Activated T-helper 1 cell treated with anti-CD3 and anti-CD28 coated beads, Interleukin-12 subunit alpha, Interleukin-12 subunit beta, Interleukin-2, Interleukin-4 antibody, amounts not matched to agents 30 ng/mL and 10 ng/mL and 1 ng/mL, durations not matched to agents 14 hours and 24 hours and 36 hours (primary cell): ENCODE measurements at regions of chr15 and their contacts with region 1.

Region 1: GRCh38 chr15:34818526-34818925 is 23.2 kb upstream of the ACTC1 start:
- DNase-seq: no peak
- H3K4me3 Mint-ChIP-seq: no peak overlapping the region
- H3K27ac Mint-ChIP-seq: no peak overlapping the region
- H3K4me1 Mint-ChIP-seq: no peaks in the 10 kb centered on the region
- H3K27me3 Mint-ChIP-seq: peaks cover 19% of the 10 kb centered on the region

Region 2: GRCh38 chr15:34001536-34001935 is 817.0 kb before region 1 on chr15:
- intact Hi-C with region 1: no loop called
- DNase-seq: no peak
- H3K4me3 Mint-ChIP-seq: no peak overlapping the region
- H3K27ac Mint-ChIP-seq: no peak overlapping the region
- H3K4me1 Mint-ChIP-seq: no peaks in the 10 kb centered on the region
- H3K27me3 Mint-ChIP-seq: no peaks in the 10 kb centered on the region

Region 3: DNA sequence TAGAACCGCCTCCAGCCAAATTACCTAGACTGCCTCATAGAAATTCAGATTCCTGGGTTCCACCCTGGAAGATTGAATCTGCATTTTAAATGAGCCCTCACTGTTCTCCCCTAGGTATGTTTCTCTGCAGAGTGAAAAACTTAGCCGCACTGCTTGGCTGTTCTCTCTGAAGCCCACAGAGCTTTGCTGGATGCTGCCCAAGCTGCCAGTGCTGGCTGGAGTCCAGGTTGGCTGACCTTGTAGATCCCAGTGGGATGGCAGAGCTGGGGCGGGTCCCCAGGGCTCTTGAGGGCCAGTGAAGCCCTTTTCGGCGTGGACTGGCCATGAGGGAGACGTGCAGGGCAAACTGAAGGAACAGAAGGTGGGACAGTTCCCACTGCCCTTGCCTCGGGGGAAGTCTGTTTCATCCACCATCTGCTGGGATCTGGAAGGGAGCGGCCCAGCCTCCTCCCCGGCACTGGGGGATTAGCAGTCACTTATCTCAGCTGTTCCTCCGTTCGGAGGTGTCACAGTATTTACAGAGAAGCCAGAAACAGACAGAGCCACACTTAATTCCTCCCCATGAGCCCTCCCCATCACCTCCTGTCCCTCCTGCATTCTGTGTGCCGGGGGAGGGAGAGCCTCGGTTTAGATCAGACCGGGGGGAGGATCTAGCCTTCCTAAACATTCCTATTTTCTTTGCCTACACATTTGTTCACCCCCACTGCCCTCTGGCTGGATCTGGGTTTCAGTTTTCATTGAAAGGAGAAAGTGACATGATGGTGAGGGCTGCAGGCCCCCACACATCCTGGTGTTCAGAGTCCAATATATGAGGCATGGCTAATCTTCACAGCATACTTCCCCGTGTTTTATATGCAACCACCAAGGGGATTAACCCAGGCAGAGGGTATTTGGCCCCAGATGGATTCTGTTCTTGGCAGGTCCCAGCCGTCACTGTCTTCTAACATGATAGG is 19.1 kb before region 1 on chr15:
- intact Hi-C with region 1: loop called (anchors 1 kb)
- DNase-seq: no peak
- H3K4me3 Mint-ChIP-seq: no peak overlapping the region
- H3K27ac Mint-ChIP-seq: no peak overlapping the region
- H3K4me1 Mint-ChIP-seq: no peaks in the 10 kb centered on the region
- H3K27me3 Mint-ChIP-seq: peaks cover 35% of the 10 kb centered on the region